CD8-positive, alpha-beta memory T cell (primary cell): ENCODE measurements at regions of chr22 and their contacts with region 1.

Region 1: DNA sequence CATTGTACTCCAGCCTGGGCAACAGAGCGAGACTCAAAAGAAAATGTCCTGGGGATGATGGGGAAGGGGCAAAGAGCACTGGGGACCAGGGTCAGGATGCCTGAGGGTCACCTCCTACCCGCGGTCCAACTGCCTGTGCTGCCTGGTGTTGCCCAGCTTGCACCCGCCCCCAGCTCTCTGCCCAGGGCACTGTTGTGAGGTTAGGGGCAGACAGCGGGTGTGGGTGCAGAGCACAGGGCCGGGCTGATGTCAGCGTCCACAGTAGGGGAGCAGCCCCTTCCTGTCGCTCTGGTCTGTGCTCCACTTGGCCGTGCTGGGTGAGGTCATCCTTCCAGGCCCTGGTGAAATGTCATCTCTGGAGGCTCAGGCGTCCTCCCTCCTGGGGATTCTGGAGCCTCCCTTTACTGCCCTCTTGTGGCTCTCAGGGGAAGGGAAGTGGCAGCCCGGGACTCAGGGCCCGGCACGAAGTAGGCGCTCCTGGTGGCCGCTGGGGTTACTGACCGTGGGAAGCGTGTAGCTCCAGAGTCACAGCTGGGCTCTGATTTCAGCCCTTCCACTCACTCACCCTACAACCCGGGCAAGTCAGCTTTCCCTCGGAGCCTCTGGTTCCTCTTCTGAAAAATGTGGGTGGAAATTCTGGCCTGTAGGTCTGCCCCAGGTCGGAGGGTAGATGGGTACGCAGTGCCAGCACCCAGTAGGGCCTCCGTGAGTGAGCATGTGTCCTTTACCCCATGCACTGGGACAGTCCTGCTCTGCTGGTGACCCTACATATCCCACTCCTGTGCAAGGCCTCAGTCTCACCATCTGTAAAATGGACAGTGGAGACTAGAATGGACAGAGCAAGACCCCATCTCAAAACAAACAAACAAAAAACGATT is 17.3 kb upstream of the PRR5 start:
- DNase-seq: peak; percentile 75 to 89 (median 80)
- H3K4me3 ChIP-seq: no peak overlapping the region
- H3K4me3 Mint-ChIP-seq: peak overlapping the region in 6 of 7 donors; percentile 68 to 83 (median 74)
- H3K27ac ChIP-seq: peak overlapping the region; percentile 24
- H3K27ac Mint-ChIP-seq: peak overlapping the region; percentile 31 to 95 (median 93)
- H3K4me1 ChIP-seq: peaks cover 38% of the 10 kb centered on the region
- H3K4me1 Mint-ChIP-seq: peaks cover 48 to 64% (median 56%) of the 10 kb centered on the region in 3 donors
- H3K27me3 ChIP-seq: no peaks in the 10 kb centered on the region
- H3K27me3 Mint-ChIP-seq: no peaks in the 10 kb centered on the region

Region 2: DNA sequence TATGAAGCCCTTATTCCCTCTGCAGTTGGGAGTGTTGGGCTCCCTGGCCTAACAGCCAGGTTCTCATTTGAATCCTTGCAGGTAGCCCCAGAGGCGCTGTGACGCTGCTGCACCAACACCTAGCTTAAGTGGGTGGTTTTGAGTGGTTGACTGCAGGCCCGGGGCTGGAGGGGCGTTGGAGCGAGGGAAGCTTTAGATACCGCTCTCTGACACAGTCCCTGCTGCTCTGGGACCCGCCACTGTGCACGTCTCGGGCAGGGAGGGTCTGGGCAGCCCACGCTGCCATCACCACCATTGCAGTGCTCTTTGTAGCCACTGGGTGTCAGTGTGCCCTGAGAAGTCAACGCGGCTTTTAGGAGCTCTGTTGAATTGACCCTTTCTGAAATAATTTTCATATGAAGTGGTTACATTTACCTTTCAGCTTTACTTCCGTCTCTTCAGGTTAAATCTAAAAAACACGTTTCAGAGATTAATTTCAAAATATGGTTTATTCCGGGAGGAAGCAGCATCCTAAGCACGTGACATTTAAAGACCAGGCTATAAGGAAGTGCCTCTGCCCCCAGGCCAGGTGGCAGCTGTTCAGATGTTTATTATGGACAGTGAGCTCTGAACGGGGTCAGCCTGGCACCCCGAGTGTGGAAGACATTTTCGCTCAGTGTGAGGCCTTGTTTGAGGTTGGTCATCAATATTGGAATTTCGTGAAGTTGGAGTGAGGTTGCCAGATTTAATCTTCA is 691.6 kb before region 1 on chr22:
- CTCF ChIA-PET with region 1: interaction called, 14 read pairs
- POLR2A ChIA-PET with region 1: no interaction called
- DNase-seq: peak; percentile 31 to 66 (median 36)
- H3K4me3 ChIP-seq: no peak overlapping the region
- H3K4me3 Mint-ChIP-seq: peak overlapping the region in 3 of 7 donors; percentile 31 to 63 (median 48)
- H3K27ac ChIP-seq: no peak overlapping the region
- H3K27ac Mint-ChIP-seq: peak overlapping the region; percentile 45 to 97 (median 78)
- H3K4me1 ChIP-seq: peaks cover 17% of the 10 kb centered on the region
- H3K4me1 Mint-ChIP-seq: peaks cover 23 to 39% (median 35%) of the 10 kb centered on the region in 3 donors
- H3K27me3 ChIP-seq: no peaks in the 10 kb centered on the region
- H3K27me3 Mint-ChIP-seq: no peaks in the 10 kb centered on the region

Region 3: GRCh38 chr22:44595841-44596341 is 88.9 kb before region 1 on chr22:
- CTCF ChIA-PET with region 1: no interaction called
- POLR2A ChIA-PET with region 1: no interaction called
- DNase-seq: peak in 1 of 5 donors; percentile 17
- H3K4me3 ChIP-seq: no peak overlapping the region
- H3K4me3 Mint-ChIP-seq: no peak overlapping the region
- H3K27ac ChIP-seq: no peak overlapping the region
- H3K27ac Mint-ChIP-seq: peak overlapping the region in 2 of 8 donors; percentile 22 to 43
- H3K4me1 ChIP-seq: no peaks in the 10 kb centered on the region
- H3K4me1 Mint-ChIP-seq: peaks cover 0 to 10% (median 4%) of the 10 kb centered on the region in 3 donors
- H3K27me3 ChIP-seq: no peaks in the 10 kb centered on the region
- H3K27me3 Mint-ChIP-seq: peaks cover 20 to 38% of the 10 kb centered on the region in 2 donors

Region 4: DNA sequence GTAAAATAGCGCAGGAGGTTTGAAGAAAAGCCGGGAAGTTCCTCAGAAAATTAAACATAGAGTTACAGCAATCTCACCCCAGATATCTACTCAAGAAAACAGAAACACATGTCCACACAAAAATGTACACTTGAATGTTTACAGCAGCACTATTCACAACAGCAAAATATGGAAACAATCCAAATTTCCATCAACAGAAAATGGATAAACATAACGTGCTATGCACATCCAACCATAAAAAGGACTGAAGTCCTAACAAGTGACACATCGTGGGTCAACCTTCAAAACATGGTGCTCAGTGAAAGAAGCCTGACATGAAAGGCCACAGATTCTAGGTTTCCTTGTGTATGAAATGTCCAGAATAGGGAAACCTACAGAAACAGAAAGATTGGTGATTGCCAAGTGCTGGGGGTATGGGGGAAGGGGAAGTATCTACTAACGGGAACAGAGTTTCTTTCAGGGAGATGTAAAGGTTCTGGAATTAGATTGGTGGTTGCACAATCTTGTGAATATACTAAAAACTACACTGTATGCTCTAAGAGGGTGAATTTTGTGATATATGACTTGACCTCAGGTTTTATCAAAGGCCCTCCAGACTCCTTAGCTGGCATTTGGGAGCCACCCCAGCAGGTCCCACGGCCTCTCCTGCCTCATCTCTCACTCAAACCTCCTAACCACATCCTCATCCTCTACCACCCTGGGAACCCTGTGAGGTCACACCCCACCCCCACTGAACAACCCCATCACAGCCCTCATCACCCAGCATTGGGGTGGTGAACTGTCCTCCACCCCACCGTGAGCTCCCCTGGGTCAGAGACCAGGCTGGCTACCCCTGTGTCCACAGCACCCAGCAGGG is 52.0 kb before region 1 on chr22:
- CTCF ChIA-PET with region 1: interaction called, 10 read pairs
- POLR2A ChIA-PET with region 1: no interaction called
- DNase-seq: no peak
- H3K4me3 ChIP-seq: no peak overlapping the region
- H3K4me3 Mint-ChIP-seq: no peak overlapping the region
- H3K27ac ChIP-seq: no peak overlapping the region
- H3K27ac Mint-ChIP-seq: no peak overlapping the region
- H3K4me1 ChIP-seq: peaks cover 22% of the 10 kb centered on the region
- H3K4me1 Mint-ChIP-seq: peaks cover 0 to 7% (median 0%) of the 10 kb centered on the region in 3 donors
- H3K27me3 ChIP-seq: no peaks in the 10 kb centered on the region
- H3K27me3 Mint-ChIP-seq: peaks cover 0 to 3% of the 10 kb centered on the region in 2 donors

Region 5: DNA sequence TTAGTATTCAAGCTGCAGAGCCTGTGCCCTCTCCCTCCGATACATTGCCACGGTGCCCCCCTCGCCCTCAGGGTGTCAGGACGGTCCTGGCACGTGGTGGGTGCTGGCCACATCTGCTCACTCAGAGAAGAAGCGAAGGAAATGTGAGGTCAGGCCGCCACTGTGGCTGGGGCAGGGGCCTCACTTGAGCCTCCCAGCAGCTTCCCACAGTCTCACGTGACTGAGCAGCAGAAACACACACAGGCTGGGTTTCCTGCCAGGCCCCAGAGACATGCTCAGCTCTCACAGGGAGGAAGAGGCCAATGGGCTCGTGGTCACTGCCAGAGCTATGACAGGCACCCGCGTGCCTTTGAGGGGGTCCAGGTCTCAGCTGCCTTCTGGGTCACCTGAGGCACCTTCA is 20.6 kb before region 1 on chr22:
- CTCF ChIA-PET with region 1: interaction called, 46 read pairs
- POLR2A ChIA-PET with region 1: interaction called, 7 read pairs
- DNase-seq: peak; percentile 36 to 76 (median 50)
- H3K4me3 ChIP-seq: peak overlapping the region; percentile 49
- H3K4me3 Mint-ChIP-seq: peak overlapping the region; percentile 30 to 79 (median 60)
- H3K27ac ChIP-seq: peak overlapping the region; percentile 39
- H3K27ac Mint-ChIP-seq: peak overlapping the region; percentile 82 to 93 (median 87)
- H3K4me1 ChIP-seq: peaks cover 51% of the 10 kb centered on the region
- H3K4me1 Mint-ChIP-seq: peaks cover 49 to 67% (median 57%) of the 10 kb centered on the region in 3 donors
- H3K27me3 ChIP-seq: no peaks in the 10 kb centered on the region
- H3K27me3 Mint-ChIP-seq: no peaks in the 10 kb centered on the region

Region 6: DNA sequence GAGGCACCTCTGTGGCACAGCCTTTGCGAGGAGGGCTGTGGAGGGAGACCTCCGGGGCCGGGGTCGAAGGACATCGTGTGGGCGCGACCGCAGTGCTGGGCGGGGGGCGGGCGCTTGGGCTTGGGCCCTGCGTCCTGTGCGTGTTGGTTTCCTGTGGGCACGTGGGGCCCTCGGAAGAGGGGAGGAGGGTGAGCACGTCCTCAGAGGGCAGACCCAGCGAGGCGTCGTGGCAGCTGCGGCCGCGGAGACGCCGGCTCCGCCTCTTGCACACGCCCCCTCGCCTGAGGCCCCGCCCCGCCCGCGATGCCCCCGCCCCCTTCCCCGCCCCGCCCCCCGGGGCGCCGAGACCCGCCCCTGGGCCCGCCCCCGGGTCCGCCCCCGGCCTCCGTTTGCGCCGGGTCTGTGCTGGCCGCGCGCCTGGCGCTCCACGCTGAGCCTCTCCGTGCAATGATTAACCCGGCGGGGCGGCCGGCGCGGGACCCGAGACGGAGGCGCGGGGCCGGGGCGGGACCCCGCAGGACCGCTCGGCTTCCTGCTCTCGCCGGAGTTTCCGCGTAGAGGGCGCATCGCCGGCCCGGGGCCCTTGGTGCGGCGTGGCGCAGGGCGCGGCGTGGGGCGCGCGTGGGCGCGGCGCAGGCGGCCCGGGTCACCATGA is 17.2 kb after region 1 on chr22 and contains the start of gene PRR5:
- CTCF ChIA-PET with region 1: interaction called, 28 read pairs
- POLR2A ChIA-PET with region 1: interaction called, 3 read pairs
- DNase-seq: peak; percentile 75 to 93 (median 78)
- H3K4me3 ChIP-seq: peak within 1 kb of the TSS; percentile 63
- H3K4me3 Mint-ChIP-seq: peak within 1 kb of the TSS; percentile 82 to 91 (median 85)
- H3K27ac ChIP-seq: peak within 1 kb of the TSS; percentile 54
- H3K27ac Mint-ChIP-seq: peak within 1 kb of the TSS; percentile 57 to 91 (median 91)
- H3K4me1 ChIP-seq: peaks cover 37% of the 10 kb centered on the region
- H3K4me1 Mint-ChIP-seq: peaks cover 38 to 60% (median 40%) of the 10 kb centered on the region in 3 donors
- H3K27me3 ChIP-seq: no peaks in the 10 kb centered on the region
- H3K27me3 Mint-ChIP-seq: no peaks in the 10 kb centered on the region
- total RNA-seq, gene PRR5: 26.4 to 29.9 TPM